Activated CD4-positive, alpha-beta T cell treated with anti-CD3 and anti-CD28 coated beads for 36 hours (primary cell): ENCODE measurements at regions of chr14 and their contacts with region 1.

Region 1: GRCh38 chr14:93939304-93940229 is 12.4 kb downstream of the FAM181A start:
- DNase-seq: peak; percentile 94
- ATAC-seq: peak; percentile 95
- H3K4me3 Mint-ChIP-seq: peak overlapping the region; percentile 43
- H3K27ac Mint-ChIP-seq: peak overlapping the region; percentile 38
- H3K4me1 Mint-ChIP-seq: peaks cover 14% of the 10 kb centered on the region
- H3K27me3 Mint-ChIP-seq: peaks cover 14% of the 10 kb centered on the region

Region 2: DNA sequence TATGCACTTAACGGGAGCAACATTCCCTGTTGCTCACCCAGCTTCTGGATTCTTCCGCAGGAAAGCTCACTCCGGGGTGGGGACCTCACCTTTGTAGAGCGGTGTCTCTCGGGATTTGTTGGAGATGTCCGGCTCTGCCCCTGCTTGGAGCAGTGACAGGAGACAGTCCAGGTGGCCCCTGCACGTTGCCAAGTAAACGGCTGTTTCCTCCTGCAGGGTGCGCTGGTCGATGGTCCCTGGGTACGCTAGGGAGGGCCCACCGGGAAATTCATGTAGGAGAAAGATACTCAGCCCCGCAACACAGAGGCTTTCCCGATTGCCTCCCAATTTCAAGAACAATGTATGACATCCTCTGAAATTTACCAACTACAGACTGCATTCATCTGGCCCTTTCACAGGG is 13.7 kb after region 1 on chr14:
- CTCF ChIA-PET with region 1: interaction called, 46 read pairs
- POLR2A ChIA-PET with region 1: no interaction called
- intact Hi-C with region 1: no loop called
- DNase-seq: no peak
- ATAC-seq: no peak
- H3K4me3 Mint-ChIP-seq: peak overlapping the region; percentile 75
- H3K27ac Mint-ChIP-seq: peak overlapping the region; percentile 39
- H3K4me1 Mint-ChIP-seq: peaks cover 80% of the 10 kb centered on the region
- H3K27me3 Mint-ChIP-seq: no peaks in the 10 kb centered on the region

Region 3: DNA sequence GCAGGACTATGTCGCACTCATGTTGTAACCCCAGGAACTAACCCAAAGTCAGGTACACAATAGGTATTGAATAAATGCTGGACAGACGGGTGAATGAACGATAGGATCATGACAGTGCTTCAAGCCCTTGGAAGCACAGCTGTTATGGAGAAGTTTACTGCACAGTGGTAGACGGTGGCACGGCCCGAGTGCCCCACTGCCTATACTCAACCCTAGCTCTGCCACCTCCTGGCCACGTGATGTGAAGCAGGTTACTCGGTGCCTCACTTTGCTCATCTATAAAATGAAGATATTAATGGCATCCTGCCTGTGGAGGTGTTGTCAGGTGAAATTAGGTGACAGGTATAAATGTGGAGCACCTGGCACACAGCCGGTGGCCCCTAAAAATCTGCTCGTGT is 31.0 kb after region 1 on chr14:
- CTCF ChIA-PET with region 1: interaction called, 180 read pairs
- POLR2A ChIA-PET with region 1: interaction called, 11 read pairs
- intact Hi-C with region 1: loop called (anchors 1 kb)
- DNase-seq: peak; percentile 83
- ATAC-seq: peak; percentile 74
- H3K4me3 Mint-ChIP-seq: peak overlapping the region; percentile 70
- H3K27ac Mint-ChIP-seq: peak overlapping the region; percentile 97
- H3K4me1 Mint-ChIP-seq: peaks cover 75% of the 10 kb centered on the region
- H3K27me3 Mint-ChIP-seq: peaks cover 2% of the 10 kb centered on the region

Region 4: GRCh38 chr14:93994919-93995682 is 55.5 kb after region 1 on chr14:
- CTCF ChIA-PET with region 1: interaction called, 349 read pairs
- POLR2A ChIA-PET with region 1: interaction called, 12 read pairs
- intact Hi-C with region 1: no loop called
- DNase-seq: peak; percentile 87
- ATAC-seq: peak; percentile 92
- H3K4me3 Mint-ChIP-seq: no peak overlapping the region
- H3K27ac Mint-ChIP-seq: peak overlapping the region; percentile 64
- H3K4me1 Mint-ChIP-seq: peaks cover 53% of the 10 kb centered on the region
- H3K27me3 Mint-ChIP-seq: no peaks in the 10 kb centered on the region

Region 5: GRCh38 chr14:94009767-94010166 is 70.2 kb after region 1 on chr14:
- CTCF ChIA-PET with region 1: interaction called, 349 read pairs
- POLR2A ChIA-PET with region 1: no interaction called
- intact Hi-C with region 1: no loop called
- DNase-seq: no peak
- ATAC-seq: peak; percentile 45
- H3K4me3 Mint-ChIP-seq: no peak overlapping the region
- H3K27ac Mint-ChIP-seq: no peak overlapping the region
- H3K4me1 Mint-ChIP-seq: peaks cover 33% of the 10 kb centered on the region
- H3K27me3 Mint-ChIP-seq: peaks cover 4% of the 10 kb centered on the region

Region 6: DNA sequence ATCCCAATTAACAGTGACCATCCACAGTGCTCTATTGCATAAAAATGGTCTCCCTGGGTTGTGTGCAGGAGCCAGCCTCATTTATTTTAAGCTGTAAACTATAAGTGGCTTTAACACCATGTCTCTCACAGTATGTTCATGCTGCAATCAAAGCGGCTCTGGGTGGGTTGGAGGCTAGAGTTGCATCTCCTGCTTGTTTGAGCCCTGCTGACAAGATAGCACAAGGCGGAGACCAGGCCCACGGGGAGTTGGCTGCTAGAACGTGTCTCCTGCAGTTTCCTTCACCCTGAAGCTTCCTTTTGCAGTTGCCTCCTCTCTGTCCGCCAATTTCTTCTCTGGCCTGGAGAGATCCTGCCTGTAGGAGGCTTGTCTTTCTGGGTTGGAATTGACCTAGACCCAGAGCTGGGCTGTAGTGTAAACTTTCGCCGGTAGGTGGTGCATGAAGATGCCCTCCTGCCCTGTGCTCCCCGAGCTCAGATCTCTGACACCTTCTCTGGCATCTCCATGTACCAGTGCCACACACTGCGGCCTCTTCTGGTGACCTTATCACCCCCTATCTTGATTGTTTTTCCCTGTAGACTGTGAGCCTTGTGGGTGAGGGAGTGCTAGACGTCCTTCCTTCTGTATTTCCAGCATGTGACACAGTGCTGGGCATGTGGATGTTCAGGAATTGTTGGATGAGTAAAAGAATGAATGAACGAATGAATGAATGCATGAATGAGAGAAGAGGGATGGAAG is 96.9 kb after region 1 on chr14:
- CTCF ChIA-PET with region 1: interaction called, 16 read pairs
- POLR2A ChIA-PET with region 1: no interaction called
- intact Hi-C with region 1: no loop called
- DNase-seq: peak; percentile 89
- ATAC-seq: peak; percentile 100
- H3K4me3 Mint-ChIP-seq: no peak overlapping the region
- H3K27ac Mint-ChIP-seq: no peak overlapping the region
- H3K4me1 Mint-ChIP-seq: peaks cover 3% of the 10 kb centered on the region
- H3K27me3 Mint-ChIP-seq: no peaks in the 10 kb centered on the region

Region 7: GRCh38 chr14:94180655-94181271 is 241.2 kb after region 1 on chr14:
- CTCF ChIA-PET with region 1: interaction called, 7 read pairs
- POLR2A ChIA-PET with region 1: no interaction called
- intact Hi-C with region 1: loop called in 1 of 2 experiments (anchors 2 kb)
- DNase-seq: peak; percentile 34
- ATAC-seq: peak; percentile 77
- H3K4me3 Mint-ChIP-seq: peak overlapping the region; percentile 81
- H3K27ac Mint-ChIP-seq: peak overlapping the region; percentile 55
- H3K4me1 Mint-ChIP-seq: peaks cover 52% of the 10 kb centered on the region
- H3K27me3 Mint-ChIP-seq: peaks cover 2% of the 10 kb centered on the region